ENCODE measurements at regions of chr18 and their contacts with region 1.

Region 1: GRCh38 chr18:3623769-3624545 is 174.0 kb downstream of the TGIF1 start:
- DNase-seq: peak; percentile 98
- ATAC-seq: peak; percentile 81
- H3K4me3 ChIP-seq: peak overlapping the region; percentile 53
- H3K27ac ChIP-seq: peak overlapping the region; percentile 98
- H3K4me1 ChIP-seq: peaks cover 50% of the 10 kb centered on the region
- H3K27me3 ChIP-seq: no peaks in the 10 kb centered on the region
- CTCF ChIP-seq: no peak

Region 2: DNA sequence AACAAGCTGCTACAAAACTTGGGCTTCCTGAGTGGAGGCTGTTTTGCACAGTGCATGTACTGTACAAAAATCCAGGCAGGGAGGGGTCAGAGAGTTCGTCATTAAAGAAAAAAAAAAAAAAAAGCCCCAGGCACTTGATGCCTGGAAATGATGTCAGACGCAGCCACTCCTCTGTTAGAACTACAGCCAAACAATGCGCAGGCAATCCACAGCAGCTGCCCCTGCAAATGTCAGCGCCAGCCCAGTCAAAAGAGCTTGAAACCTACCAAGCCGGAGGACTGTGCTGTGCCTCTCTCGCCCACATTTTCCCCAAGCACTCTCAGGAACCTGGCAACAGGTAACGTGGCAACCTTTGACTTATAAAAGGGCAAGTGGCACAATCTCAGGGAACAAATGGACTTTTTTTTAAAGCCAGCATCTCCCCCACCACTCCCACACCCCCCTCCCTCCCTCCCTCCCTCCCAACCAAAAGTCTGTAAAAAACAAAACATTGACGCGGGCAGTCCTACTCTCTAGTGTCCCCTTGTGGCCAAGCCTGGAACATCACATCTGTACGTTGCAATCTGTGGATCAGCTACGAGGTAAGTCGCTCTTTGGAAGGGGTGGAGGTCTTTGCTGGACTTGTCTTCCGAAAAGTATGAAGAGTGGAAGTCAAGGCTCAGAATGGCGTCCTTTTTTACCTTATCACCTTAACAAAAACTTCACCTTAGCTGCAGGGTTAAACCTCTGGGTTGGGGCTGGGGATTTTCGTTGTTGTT is 29.9 kb before region 1 on chr18:
- CTCF ChIA-PET with region 1: interaction called, 3 read pairs
- POLR2A ChIA-PET with region 1: interaction called, 14 read pairs
- intact Hi-C with region 1: loop called (anchors 1 kb)
- DNase-seq: peak; percentile 94
- ATAC-seq: peak; percentile 50
- H3K4me3 ChIP-seq: peak overlapping the region; percentile 60
- H3K27ac ChIP-seq: peak overlapping the region; percentile 99
- H3K4me1 ChIP-seq: peaks cover 45% of the 10 kb centered on the region
- H3K27me3 ChIP-seq: no peaks in the 10 kb centered on the region
- CTCF ChIP-seq: peak; percentile 81

Region 3: DNA sequence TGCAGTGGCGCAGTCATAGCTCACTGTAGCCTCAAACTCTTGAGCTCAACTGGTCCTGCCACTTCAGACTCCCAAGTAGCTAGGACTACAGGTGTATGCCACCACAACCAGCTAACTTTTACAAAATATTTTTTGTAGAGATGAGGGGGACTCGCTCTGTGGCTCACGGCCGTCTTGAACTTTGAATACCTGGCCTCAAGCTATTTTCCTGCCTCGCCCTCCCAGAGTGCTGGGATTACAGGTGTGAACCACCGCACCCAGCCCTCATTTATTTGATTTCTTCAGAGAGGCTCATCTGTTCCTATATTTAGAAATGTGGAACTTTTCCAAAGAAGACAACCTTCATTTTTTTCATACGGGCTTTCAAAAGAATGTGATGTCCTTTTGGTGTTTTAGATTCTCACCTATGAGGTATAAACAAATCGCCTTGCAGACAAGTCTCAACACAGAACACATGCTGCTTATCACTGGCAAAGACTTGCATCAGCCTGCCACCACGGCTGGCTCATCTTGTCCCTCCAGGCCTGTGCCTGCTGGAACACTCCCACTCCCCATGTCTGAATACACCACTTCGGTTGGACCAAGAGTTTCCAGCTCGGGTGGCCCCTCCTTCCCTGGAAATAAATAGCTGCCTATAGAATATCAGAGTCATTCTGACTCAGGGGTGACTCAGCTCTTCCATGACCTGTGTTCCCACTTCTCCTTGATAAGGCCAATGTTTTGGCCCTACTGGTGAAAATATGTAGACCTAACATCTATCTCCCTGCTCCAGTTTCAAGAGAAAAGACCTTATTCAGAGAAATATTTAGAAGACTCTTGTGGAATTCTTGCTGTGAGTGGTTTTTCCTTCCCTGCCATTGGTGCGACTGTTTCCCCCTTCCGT is 28.7 kb after region 1 on chr18:
- CTCF ChIA-PET with region 1: no interaction called
- POLR2A ChIA-PET with region 1: interaction called, 7 read pairs
- intact Hi-C with region 1: loop called (anchors 1 kb)
- DNase-seq: peak; percentile 99
- ATAC-seq: peak; percentile 97
- H3K4me3 ChIP-seq: no peak overlapping the region
- H3K27ac ChIP-seq: peak overlapping the region; percentile 86
- H3K4me1 ChIP-seq: peaks cover 42% of the 10 kb centered on the region
- H3K27me3 ChIP-seq: no peaks in the 10 kb centered on the region
- CTCF ChIP-seq: 0 out of 2 replicates have a peak, but pooled peaks have one; percentile 12

Measured in PC-3 (cell line).